AG04450 (cell line): ENCODE measurements at regions of chr13 and their contacts with region 1.

Region 1: DNA sequence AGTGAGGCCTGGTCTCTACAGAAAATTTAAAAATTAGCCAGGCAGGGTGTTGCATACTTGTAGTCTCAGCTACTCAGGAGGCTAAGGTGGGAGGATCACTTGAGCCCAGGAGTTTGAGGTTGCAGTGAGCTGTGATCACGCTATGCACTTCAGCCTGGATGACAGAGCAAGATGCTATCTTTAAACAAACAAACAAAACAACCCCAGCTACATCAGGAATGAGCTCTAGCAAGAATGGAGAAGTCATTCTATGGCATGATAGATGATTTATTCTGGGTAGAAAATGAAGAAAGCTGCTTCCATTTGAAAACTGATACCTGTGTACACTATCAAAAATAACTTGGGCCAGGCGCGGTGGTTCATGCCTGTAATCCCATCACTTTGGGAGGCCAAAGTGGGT is 15.8 kb upstream of the SHISA2 start:
- DNase-seq: no peak
- H3K4me3 ChIP-seq: no peak overlapping the region
- H3K27ac ChIP-seq: no peak overlapping the region
- H3K27me3 ChIP-seq: no peaks in the 10 kb centered on the region
- CTCF ChIP-seq: no peak

Region 2: DNA sequence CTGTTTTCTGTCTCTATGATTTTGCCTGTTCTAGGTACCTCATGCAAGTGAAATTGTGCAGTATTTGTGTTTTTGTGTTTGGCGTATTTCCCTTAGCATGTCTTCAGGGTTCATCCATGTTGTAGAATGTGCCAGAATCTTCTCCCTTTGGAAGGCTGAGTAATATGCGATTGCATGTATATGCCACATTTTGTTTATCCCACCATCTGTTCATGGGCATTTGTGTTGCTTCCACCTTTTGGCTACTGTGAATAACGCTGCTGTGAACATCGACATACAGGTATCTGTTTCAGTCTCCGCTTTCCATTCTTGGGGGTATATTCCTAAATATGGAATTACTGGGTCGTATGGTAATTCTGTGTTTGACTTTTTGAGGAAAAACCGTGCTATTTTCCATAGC is 505.8 kb before region 1 on chr13:
- CTCF ChIA-PET with region 1: interaction called, 10 read pairs
- POLR2A ChIA-PET with region 1: no interaction called
- DNase-seq: no peak
- H3K4me3 ChIP-seq: no peak overlapping the region
- H3K27ac ChIP-seq: no peak overlapping the region
- H3K27me3 ChIP-seq: no peaks in the 10 kb centered on the region
- CTCF ChIP-seq: no peak

Region 3: GRCh38 chr13:25574437-25575411 is 492.9 kb before region 1 on chr13:
- CTCF ChIA-PET with region 1: interaction called, 16 read pairs
- POLR2A ChIA-PET with region 1: no interaction called
- DNase-seq: peak; percentile 61
- H3K4me3 ChIP-seq: no peak overlapping the region
- H3K27ac ChIP-seq: no peak overlapping the region
- H3K27me3 ChIP-seq: no peaks in the 10 kb centered on the region
- CTCF ChIP-seq: peak; percentile 93